Left lung (tissue), 14 donors: ENCODE measurements at regions of chr12 and their contacts with region 1.

Region 1: DNA sequence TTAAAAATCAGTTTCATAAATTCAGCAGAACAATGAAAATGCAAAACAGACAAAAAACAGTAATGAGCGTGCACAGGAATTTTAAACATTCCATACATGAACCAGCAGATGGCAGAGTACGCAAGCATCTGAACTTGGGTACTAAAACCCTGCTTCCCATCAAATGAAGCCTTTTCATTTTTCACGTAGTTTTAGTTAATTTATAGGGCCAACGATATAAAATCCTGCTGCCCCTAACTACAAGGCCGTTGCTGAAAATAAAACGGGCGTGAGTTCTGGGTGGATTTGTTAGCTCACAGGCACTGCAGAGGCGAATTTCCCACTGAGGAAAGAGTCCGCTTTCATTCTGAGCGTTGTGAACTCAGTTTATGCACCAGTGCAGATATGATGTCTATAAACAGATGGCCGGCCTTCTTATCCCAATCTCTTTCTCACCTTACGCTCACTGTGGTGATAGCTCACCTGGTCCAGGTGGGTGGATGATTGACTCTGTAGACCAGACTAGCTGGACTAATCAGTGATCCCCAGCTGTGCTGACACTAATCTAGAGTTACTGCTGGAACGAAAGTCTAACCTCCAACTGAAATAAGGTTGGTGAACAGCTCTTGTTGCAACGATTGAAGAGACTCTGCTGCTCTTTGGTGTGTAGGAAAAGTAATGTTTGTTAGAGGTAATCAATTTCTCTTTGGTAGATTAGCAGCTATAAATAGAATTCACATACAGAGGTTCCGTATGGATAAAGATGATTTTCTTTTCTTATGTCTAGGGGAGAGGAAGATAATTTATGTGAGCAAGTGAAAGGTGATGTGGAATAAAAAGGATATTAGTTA is 89.2 kb downstream of the PDZRN4 start:
- DNase-seq: peak in 2 of 4 donors; percentile 16 to 55
- ATAC-seq: peak; percentile 67
- H3K4me3 ChIP-seq: no peak overlapping the region
- H3K27ac ChIP-seq: no peak overlapping the region
- H3K4me1 ChIP-seq: peaks cover 0 to 5% of the 10 kb centered on the region in 2 donors
- H3K27me3 ChIP-seq: no peaks in the 10 kb centered on the region
- CTCF ChIP-seq: peak; percentile 47 to 57

Region 2: GRCh38 chr12:41120211-41120610 is 157.1 kb before region 1 on chr12:
- intact Hi-C with region 1: no loop called
- DNase-seq: no peak
- ATAC-seq: no peak
- H3K4me3 ChIP-seq: no peak overlapping the region
- H3K27ac ChIP-seq: no peak overlapping the region
- H3K4me1 ChIP-seq: no peaks in the 10 kb centered on the region
- H3K27me3 ChIP-seq: no peaks in the 10 kb centered on the region
- CTCF ChIP-seq: no peak

Region 3: GRCh38 chr12:41242603-41243002 is 34.7 kb before region 1 on chr12:
- intact Hi-C with region 1: no loop called
- DNase-seq: peak in 2 of 4 donors; percentile 25 to 40
- ATAC-seq: no peak
- H3K4me3 ChIP-seq: no peak overlapping the region
- H3K27ac ChIP-seq: no peak overlapping the region
- H3K4me1 ChIP-seq: no peaks in the 10 kb centered on the region
- H3K27me3 ChIP-seq: no peaks in the 10 kb centered on the region
- CTCF ChIP-seq: no peak

Region 4: DNA sequence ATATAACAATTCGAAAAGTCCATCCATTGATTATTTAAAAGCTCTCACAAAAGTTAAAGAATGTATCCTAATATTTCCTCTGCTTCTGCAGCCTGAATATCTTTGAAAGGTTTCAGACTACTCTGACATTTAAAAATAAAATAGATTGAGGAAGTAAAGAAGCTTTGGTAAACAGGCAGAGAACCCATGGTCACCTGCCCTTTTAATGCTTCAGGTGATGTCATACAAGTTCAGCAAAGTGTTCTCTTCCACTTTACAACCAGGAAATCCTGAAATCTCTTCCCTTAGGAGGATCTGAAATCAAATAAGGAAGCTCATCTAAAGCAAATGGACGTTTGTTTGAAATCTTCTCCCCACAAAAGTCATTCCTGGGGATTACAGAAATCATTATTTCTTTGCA is 233.1 kb after region 1 on chr12:
- intact Hi-C with region 1: no loop called
- DNase-seq: no peak
- ATAC-seq: no peak
- H3K4me3 ChIP-seq: no peak overlapping the region
- H3K27ac ChIP-seq: no peak overlapping the region
- H3K4me1 ChIP-seq: peaks cover 0 to 5% of the 10 kb centered on the region in 2 donors
- H3K27me3 ChIP-seq: no peaks in the 10 kb centered on the region
- CTCF ChIP-seq: no peak

Region 5: GRCh38 chr12:42023733-42024494 is 746.6 kb after region 1 on chr12:
- intact Hi-C with region 1: loop called in 1 of 2 experiments (anchors 10 kb)
- DNase-seq: peak; percentile 76 to 89 (median 84)
- ATAC-seq: peak; percentile 98
- H3K4me3 ChIP-seq: peak overlapping the region in 1 of 2 donors; percentile 10
- H3K27ac ChIP-seq: no peak overlapping the region
- H3K4me1 ChIP-seq: peaks cover 0 to 11% of the 10 kb centered on the region in 2 donors
- H3K27me3 ChIP-seq: peaks cover 0 to 6% of the 10 kb centered on the region in 2 donors
- CTCF ChIP-seq: peak; percentile 86 to 91